Heart right ventricle (tissue), 16 donors: ENCODE measurements at regions of chr19 and their contacts with region 1.

Region 1: GRCh38 chr19:48249502-48250014 is 6.2 kb downstream of the CARD8 start:
- DNase-seq: peak; percentile 42 to 77
- ATAC-seq: peak; percentile 81 to 97 (median 94)
- H3K4me3 ChIP-seq: peak overlapping the region; percentile 18 to 56 (median 44)
- H3K27ac ChIP-seq: peak overlapping the region; percentile 64 to 94 (median 80)
- H3K4me1 ChIP-seq: peaks cover 4 to 84% (median 56%) of the 10 kb centered on the region in 9 donors
- H3K27me3 ChIP-seq: no peaks in the 10 kb centered on the region
- CTCF ChIP-seq: no peak

Region 2: GRCh38 chr19:48203732-48204628 is 45.6 kb before region 1 on chr19:
- intact Hi-C with region 1: loop called in 3 of 10 experiments (anchors 5 to 10 kb)
- DNase-seq: peak; percentile 92 to 95
- ATAC-seq: peak; percentile 99 to 100 (median 100)
- H3K4me3 ChIP-seq: peak overlapping the region; percentile 52 to 83 (median 68)
- H3K27ac ChIP-seq: peak overlapping the region in 9 of 10 donors; percentile 49 to 81 (median 72)
- H3K4me1 ChIP-seq: peaks cover 0 to 32% (median 8%) of the 10 kb centered on the region in 9 donors
- H3K27me3 ChIP-seq: no peaks in the 10 kb centered on the region
- CTCF ChIP-seq: no peak

Region 3: DNA sequence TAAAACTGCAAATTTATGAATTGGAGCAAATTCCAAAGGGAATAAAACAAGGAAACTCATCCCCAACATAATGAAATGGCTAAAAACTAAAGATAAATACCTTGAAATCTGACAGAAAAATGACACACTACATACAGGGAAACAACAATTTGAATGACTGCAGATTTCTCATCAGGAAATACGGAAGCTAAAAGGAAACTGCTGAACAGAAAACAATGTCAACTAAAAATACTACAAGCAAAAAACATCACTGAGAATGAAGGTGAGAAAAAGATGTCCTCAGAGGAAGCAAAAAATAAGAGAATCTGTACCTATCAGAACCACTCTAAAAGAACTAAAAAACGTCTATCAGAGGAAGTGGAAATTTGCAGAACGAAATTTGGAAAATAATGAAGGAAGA is 39.6 kb before region 1 on chr19:
- intact Hi-C with region 1: loop called in 4 of 10 experiments (anchors 5 to 10 kb)
- DNase-seq: no peak
- ATAC-seq: peak in 1 of 8 donors; percentile 35
- H3K4me3 ChIP-seq: no peak overlapping the region
- H3K27ac ChIP-seq: peak overlapping the region in 4 of 10 donors; percentile 7 to 54 (median 31)
- H3K4me1 ChIP-seq: peaks cover 0 to 18% (median 9%) of the 10 kb centered on the region in 9 donors
- H3K27me3 ChIP-seq: no peaks in the 10 kb centered on the region
- CTCF ChIP-seq: no peak